PC-9 (cell line): ENCODE measurements at regions of chr6 and their contacts with region 1.

Region 1: GRCh38 chr6:24720604-24721460 is 1.9 kb upstream of the C6orf62 start:
- DNase-seq: peak; percentile 99 to 100
- H3K4me3 ChIP-seq: peak overlapping the region; percentile 95
- H3K27ac ChIP-seq: peak overlapping the region; percentile 93
- H3K4me1 ChIP-seq: peaks cover 42% of the 10 kb centered on the region
- H3K27me3 ChIP-seq: no peaks in the 10 kb centered on the region
- CTCF ChIP-seq: no peak

Region 2: GRCh38 chr6:24313251-24314141 is 407.3 kb before region 1 on chr6:
- CTCF ChIA-PET with region 1: no interaction called
- POLR2A ChIA-PET with region 1: no interaction called
- intact Hi-C with region 1: no loop called
- DNase-seq: peak; percentile 70 to 86
- H3K4me3 ChIP-seq: 0 out of 2 replicates have a peak overlapping the region, but pooled peaks have one; percentile 6
- H3K27ac ChIP-seq: no peak overlapping the region
- H3K4me1 ChIP-seq: peaks cover 14% of the 10 kb centered on the region
- H3K27me3 ChIP-seq: no peaks in the 10 kb centered on the region
- CTCF ChIP-seq: no peak

Region 3: GRCh38 chr6:24547243-24547642 is 173.6 kb before region 1 on chr6:
- CTCF ChIA-PET with region 1: interaction called, 13 read pairs
- POLR2A ChIA-PET with region 1: no interaction called
- intact Hi-C with region 1: no loop called
- DNase-seq: no peak
- H3K4me3 ChIP-seq: no peak overlapping the region
- H3K27ac ChIP-seq: no peak overlapping the region
- H3K4me1 ChIP-seq: peaks cover 9% of the 10 kb centered on the region; the same call in 1 of the 2 replicates
- H3K27me3 ChIP-seq: no peaks in the 10 kb centered on the region
- CTCF ChIP-seq: no peak

Region 4: DNA sequence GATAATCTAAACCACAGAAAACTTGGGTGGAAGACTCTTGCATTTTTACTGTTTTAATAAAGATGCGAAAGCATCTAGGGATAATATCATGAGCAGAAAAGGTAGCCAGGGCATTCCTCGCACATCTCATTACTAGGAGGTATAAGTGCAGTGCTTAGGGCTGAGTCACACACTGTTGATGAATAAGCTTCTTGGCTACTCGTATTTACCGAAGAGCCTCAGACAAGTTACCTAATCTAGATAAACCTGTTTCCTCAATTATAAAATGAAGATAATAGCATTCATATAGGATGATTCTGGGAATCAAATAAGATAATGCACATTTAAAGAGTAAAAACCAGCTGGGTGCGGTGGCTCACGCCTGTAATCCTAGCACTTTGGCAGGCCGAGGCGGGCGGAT is 74.0 kb before region 1 on chr6:
- CTCF ChIA-PET with region 1: no interaction called
- POLR2A ChIA-PET with region 1: interaction called, 5 read pairs
- intact Hi-C with region 1: loop called (anchors 1 kb)
- DNase-seq: peak; percentile 61 to 97
- H3K4me3 ChIP-seq: peak overlapping the region; percentile 76
- H3K27ac ChIP-seq: peak overlapping the region; percentile 97
- H3K4me1 ChIP-seq: peaks cover 42% of the 10 kb centered on the region
- H3K27me3 ChIP-seq: no peaks in the 10 kb centered on the region
- CTCF ChIP-seq: no peak

Region 5: DNA sequence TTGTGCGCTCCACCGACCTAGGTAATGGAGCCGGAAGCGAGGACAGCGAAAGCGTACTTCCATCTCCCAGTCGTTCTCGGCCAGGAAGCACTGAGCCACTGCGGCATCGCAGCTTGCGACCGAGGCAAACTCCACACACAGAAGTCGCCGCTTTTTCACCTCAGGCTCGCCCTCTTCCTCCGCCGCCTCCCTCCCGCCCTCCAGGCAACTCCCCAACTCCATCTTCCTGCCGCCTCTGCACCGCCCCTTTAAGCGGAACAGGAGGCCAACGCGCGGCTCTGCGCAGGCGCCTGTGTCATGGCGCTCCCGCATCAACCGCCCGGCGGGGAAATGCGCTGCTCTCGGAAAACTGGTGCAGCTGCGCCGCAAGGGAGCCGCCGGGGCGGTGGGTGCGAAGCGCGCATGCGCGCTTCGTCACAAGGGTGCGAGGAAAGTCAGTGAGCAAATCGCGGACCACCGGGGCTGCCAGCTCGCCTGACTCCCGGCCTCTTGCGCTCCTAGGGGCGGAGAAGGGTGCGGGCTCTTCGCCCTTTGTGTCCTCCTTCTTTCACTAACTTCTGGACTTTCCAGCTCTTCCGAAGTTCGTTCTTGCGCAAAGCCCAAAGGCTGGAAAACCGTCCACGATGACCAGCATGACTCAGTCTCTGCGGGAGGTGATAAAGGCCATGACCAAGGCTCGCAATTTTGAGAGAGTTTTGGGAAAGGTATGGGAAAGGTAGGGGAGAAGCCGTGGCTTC is 54.0 kb before region 1 on chr6 and contains the starts of genes ACOT13 and TDP2:
- CTCF ChIA-PET with region 1: no interaction called
- POLR2A ChIA-PET with region 1: no interaction called
- intact Hi-C with region 1: loop called (anchors 2 kb)
- DNase-seq: peak; percentile 87 to 97
- H3K4me3 ChIP-seq: peak within 1 kb of the TSS; percentile 98
- H3K27ac ChIP-seq: peak within 1 kb of the TSS; percentile 97
- H3K4me1 ChIP-seq: peaks cover 39% of the 10 kb centered on the region
- H3K27me3 ChIP-seq: no peaks in the 10 kb centered on the region
- CTCF ChIP-seq: peak; percentile 55; the same call in 1 of the 2 replicates
- total RNA-seq, gene ACOT13: 70.9 and 79.2 TPM in 2 replicates
- total RNA-seq, gene TDP2: 83.0 and 95.8 TPM in 2 replicates

Region 6: GRCh38 chr6:24683297-24684296 is 37.2 kb before region 1 on chr6:
- CTCF ChIA-PET with region 1: no interaction called
- POLR2A ChIA-PET with region 1: no interaction called
- intact Hi-C with region 1: no loop called
- DNase-seq: no peak
- H3K4me3 ChIP-seq: no peak overlapping the region
- H3K27ac ChIP-seq: no peak overlapping the region
- H3K4me1 ChIP-seq: peaks cover 11% of the 10 kb centered on the region
- H3K27me3 ChIP-seq: no peaks in the 10 kb centered on the region
- CTCF ChIP-seq: no peak

Region 7: GRCh38 chr6:24743265-24743943 is 22.6 kb after region 1 on chr6:
- CTCF ChIA-PET with region 1: no interaction called
- POLR2A ChIA-PET with region 1: interaction called, 11 read pairs
- intact Hi-C with region 1: loop called (anchors 1 kb)
- DNase-seq: peak; percentile 58 to 90
- H3K4me3 ChIP-seq: peak overlapping the region; percentile 44; the same call in 1 of the 2 replicates
- H3K27ac ChIP-seq: peak overlapping the region; percentile 97
- H3K4me1 ChIP-seq: peaks cover 26% of the 10 kb centered on the region
- H3K27me3 ChIP-seq: no peaks in the 10 kb centered on the region
- CTCF ChIP-seq: no peak

Region 8: GRCh38 chr6:24774696-24775519 is 54.1 kb after region 1 on chr6 and contains the start of gene GMNN:
- CTCF ChIA-PET with region 1: no interaction called
- POLR2A ChIA-PET with region 1: interaction called, 3 read pairs
- intact Hi-C with region 1: loop called (anchors 2 kb)
- DNase-seq: peak; percentile 83 to 96
- H3K4me3 ChIP-seq: peak within 1 kb of the TSS; percentile 72
- H3K27ac ChIP-seq: peak within 1 kb of the TSS; percentile 65
- H3K4me1 ChIP-seq: peaks cover 43% of the 10 kb centered on the region
- H3K27me3 ChIP-seq: no peaks in the 10 kb centered on the region
- CTCF ChIP-seq: no peak
- total RNA-seq, gene GMNN: 53.1 and 54.8 TPM in 2 replicates

Region 9: GRCh38 chr6:25992413-25993037 is 1271.7 kb after region 1 on chr6:
- CTCF ChIA-PET with region 1: no interaction called
- POLR2A ChIA-PET with region 1: interaction called, 10 read pairs
- intact Hi-C with region 1: no loop called
- DNase-seq: peak; percentile 77 to 99
- H3K4me3 ChIP-seq: peak overlapping the region; percentile 83
- H3K27ac ChIP-seq: peak overlapping the region; percentile 76
- H3K4me1 ChIP-seq: peaks cover 10% of the 10 kb centered on the region; the same call in 1 of the 2 replicates
- H3K27me3 ChIP-seq: no peaks in the 10 kb centered on the region
- CTCF ChIP-seq: peak; percentile 88